B cell (primary cell): ENCODE measurements at regions of chr15 and their contacts with region 1.

Region 1: GRCh38 chr15:81296673-81297072 is 27.3 kb downstream of the STARD5 start:
- DNase-seq: peak; percentile 89
- ATAC-seq: peak; percentile 39
- H3K4me3 ChIP-seq: peak overlapping the region; percentile 79 to 100 (median 87)
- H3K4me3 Mint-ChIP-seq: peak overlapping the region; percentile 100
- H3K27ac ChIP-seq: peak overlapping the region; percentile 95 to 98
- H3K27ac Mint-ChIP-seq: peak overlapping the region; percentile 98
- H3K4me1 ChIP-seq: peaks cover 54 to 86% of the 10 kb centered on the region in 2 donors
- H3K4me1 Mint-ChIP-seq: peaks cover 92% of the 10 kb centered on the region
- H3K27me3 ChIP-seq: no peaks in the 10 kb centered on the region
- H3K27me3 Mint-ChIP-seq: no peaks in the 10 kb centered on the region
- CTCF ChIP-seq: no peak

Region 2: GRCh38 chr15:80234883-80235282 is 1061.8 kb before region 1 on chr15:
- CTCF ChIA-PET with region 1: no interaction called
- POLR2A ChIA-PET with region 1: no interaction called
- intact Hi-C with region 1: no loop called
- DNase-seq: peak; percentile 36
- ATAC-seq: no peak
- H3K4me3 ChIP-seq: no peak overlapping the region
- H3K4me3 Mint-ChIP-seq: no peak overlapping the region
- H3K27ac ChIP-seq: no peak overlapping the region
- H3K27ac Mint-ChIP-seq: no peak overlapping the region
- H3K4me1 ChIP-seq: no peaks in the 10 kb centered on the region
- H3K4me1 Mint-ChIP-seq: no peaks in the 10 kb centered on the region
- H3K27me3 ChIP-seq: peaks cover 0 to 13% (median 5%) of the 10 kb centered on the region in 4 experiments
- H3K27me3 Mint-ChIP-seq: peaks cover 33% of the 10 kb centered on the region
- CTCF ChIP-seq: peak; percentile 47

Region 3: GRCh38 chr15:81000624-81001151 is 296.0 kb before region 1 on chr15 and contains the start of gene TLNRD1:
- CTCF ChIA-PET with region 1: no interaction called
- POLR2A ChIA-PET with region 1: no interaction called
- intact Hi-C with region 1: loop called (anchors 2 kb)
- DNase-seq: peak; percentile 93
- ATAC-seq: peak; percentile 66
- H3K4me3 ChIP-seq: peak within 1 kb of the TSS; percentile 70 to 94 (median 77)
- H3K4me3 Mint-ChIP-seq: peak within 1 kb of the TSS; percentile 98
- H3K27ac ChIP-seq: peak within 1 kb of the TSS; percentile 81 to 94
- H3K27ac Mint-ChIP-seq: peak within 1 kb of the TSS; percentile 99
- H3K4me1 ChIP-seq: peaks cover 36 to 39% of the 10 kb centered on the region in 2 donors
- H3K4me1 Mint-ChIP-seq: peaks cover 44% of the 10 kb centered on the region
- H3K27me3 ChIP-seq: no peaks in the 10 kb centered on the region
- H3K27me3 Mint-ChIP-seq: no peaks in the 10 kb centered on the region
- CTCF ChIP-seq: no peak
- total RNA-seq, gene TLNRD1: 26.5 and 26.7 TPM in 2 replicates

Region 4: DNA sequence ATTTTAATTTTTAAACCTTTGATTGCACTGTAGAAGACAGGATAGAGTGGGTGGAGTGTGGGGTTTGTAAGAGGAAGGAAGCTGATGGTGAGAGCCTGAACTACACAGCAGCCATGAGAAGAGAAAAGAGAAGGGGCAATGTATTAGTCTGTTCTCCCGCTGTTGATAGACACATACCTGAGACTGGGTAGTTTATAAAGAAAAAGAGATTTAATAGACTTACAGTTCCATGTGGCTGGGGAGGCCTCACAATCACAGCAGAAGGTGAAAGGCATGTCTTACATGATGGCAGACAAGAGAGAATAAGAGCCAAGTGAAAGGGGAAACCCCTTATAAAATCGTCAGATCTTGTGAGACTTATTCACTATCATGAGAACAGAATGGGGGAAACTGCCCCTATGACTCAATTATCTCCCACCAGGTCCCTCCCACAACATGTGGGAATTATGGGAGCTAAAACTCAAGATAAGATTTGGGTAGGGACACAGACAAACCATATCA is 10.0 kb before region 1 on chr15:
- CTCF ChIA-PET with region 1: interaction called, 86 read pairs
- POLR2A ChIA-PET with region 1: interaction called, 60 read pairs
- intact Hi-C with region 1: loop called (anchors 1 kb)
- DNase-seq: peak; percentile 77
- ATAC-seq: peak; percentile 80
- H3K4me3 ChIP-seq: peak overlapping the region in 3 of 5 experiments; percentile 13 to 28 (median 21)
- H3K4me3 Mint-ChIP-seq: peak overlapping the region; percentile 65
- H3K27ac ChIP-seq: peak overlapping the region; percentile 92 to 98
- H3K27ac Mint-ChIP-seq: peak overlapping the region; percentile 96
- H3K4me1 ChIP-seq: peaks cover 65 to 81% of the 10 kb centered on the region in 2 donors
- H3K4me1 Mint-ChIP-seq: peaks cover 74% of the 10 kb centered on the region
- H3K27me3 ChIP-seq: no peaks in the 10 kb centered on the region
- H3K27me3 Mint-ChIP-seq: no peaks in the 10 kb centered on the region
- CTCF ChIP-seq: no peak

Region 5: DNA sequence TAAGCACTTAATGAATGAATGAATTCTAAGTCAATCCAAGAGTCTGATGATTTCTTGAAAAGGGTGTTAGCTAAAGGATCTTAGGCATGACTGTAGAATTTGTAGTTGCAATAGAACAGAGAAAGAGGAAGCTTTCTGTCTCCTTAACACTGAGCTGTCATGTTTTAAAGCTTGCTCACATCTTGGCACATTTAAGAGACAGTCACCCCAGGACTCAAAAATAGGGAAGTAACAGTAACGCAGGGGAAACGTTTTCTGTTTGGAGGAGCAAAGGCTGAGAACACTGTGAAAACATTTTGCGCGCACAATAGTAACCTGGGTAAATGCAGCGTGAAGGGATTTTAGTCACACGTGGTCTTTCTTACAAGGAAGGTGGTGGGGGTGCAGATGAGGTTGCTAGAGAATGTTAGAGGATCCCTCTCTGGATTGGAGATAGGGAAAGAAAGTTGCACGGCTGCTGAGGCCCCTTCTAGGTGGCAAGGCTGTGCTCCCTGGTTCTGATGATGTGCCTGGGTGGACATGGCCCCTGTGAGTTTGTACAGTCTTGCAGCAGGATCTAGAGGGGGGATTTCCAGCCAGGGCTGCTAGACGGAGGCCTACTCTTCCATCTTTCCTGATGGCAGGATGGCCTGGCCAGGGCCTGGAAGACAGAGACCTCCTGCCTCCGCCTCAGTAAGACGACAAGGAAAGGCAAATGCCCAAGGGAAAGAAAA is 15.2 kb after region 1 on chr15:
- CTCF ChIA-PET with region 1: interaction called, 65 read pairs
- POLR2A ChIA-PET with region 1: interaction called, 63 read pairs
- intact Hi-C with region 1: loop called (anchors 1 kb)
- DNase-seq: peak; percentile 85
- ATAC-seq: peak; percentile 86
- H3K4me3 ChIP-seq: peak overlapping the region in 3 of 5 experiments; percentile 23 to 27 (median 25)
- H3K4me3 Mint-ChIP-seq: peak overlapping the region; percentile 65
- H3K27ac ChIP-seq: peak overlapping the region; percentile 66 to 88
- H3K27ac Mint-ChIP-seq: peak overlapping the region; percentile 87
- H3K4me1 ChIP-seq: peaks cover 62 to 67% of the 10 kb centered on the region in 2 donors
- H3K4me1 Mint-ChIP-seq: peaks cover 80% of the 10 kb centered on the region
- H3K27me3 ChIP-seq: no peaks in the 10 kb centered on the region
- H3K27me3 Mint-ChIP-seq: no peaks in the 10 kb centered on the region
- CTCF ChIP-seq: no peak

Region 6: DNA sequence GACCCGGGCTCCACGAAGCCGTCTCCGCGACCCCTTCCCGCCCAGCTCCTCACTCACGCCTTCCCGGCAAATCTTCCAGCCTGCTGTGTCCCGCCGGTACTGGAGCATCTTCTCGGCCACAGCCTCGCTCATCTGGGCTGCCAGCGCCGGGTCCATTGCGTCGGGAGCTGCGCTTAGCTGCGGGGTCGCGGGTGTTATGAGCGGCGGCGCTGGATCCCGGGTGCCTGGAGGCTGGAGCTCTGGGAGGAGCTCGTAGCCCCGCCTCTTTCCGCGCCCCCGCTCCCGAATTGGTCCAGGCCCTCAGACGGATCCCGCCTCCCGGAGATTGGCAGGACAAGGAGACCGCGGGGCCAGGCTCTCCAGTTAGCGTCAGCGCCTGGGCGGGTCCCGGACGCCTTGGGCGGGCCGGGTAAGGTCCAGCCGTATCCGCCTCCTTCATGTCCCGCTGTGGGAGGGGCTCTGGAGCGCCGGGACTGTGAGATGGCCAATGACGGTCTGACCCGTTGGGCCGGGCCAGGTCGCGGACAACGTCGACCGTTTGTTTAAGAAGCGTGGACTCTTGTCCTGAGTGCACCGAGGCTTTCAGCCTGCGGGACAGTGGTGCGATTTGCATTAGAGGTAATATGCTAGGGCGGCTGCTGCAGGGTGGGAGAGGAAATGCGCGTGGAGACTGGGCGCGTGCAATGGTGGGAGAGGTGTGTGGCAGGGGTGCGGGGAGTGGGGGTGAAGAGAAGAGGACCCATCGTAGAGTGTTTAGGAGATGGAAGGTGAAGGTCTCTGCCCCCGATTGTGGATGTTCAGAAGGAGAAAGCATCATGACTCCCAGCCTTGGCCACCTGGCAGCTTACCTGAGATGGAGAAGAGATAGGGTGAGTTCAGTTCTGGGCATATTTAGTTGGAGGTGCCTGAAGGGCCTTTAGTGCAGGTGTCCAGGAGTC is 27.5 kb after region 1 on chr15 and contains the start of gene STARD5:
- CTCF ChIA-PET with region 1: interaction called, 10 read pairs
- POLR2A ChIA-PET with region 1: interaction called, 13 read pairs
- intact Hi-C with region 1: loop called (anchors 1 kb)
- DNase-seq: peak; percentile 92
- ATAC-seq: peak; percentile 99
- H3K4me3 ChIP-seq: peak within 1 kb of the TSS; percentile 54 to 79 (median 77)
- H3K4me3 Mint-ChIP-seq: peak within 1 kb of the TSS; percentile 100
- H3K27ac ChIP-seq: peak within 1 kb of the TSS; percentile 27 to 68
- H3K27ac Mint-ChIP-seq: peak within 1 kb of the TSS; percentile 95
- H3K4me1 ChIP-seq: peaks cover 18 to 32% of the 10 kb centered on the region in 2 donors
- H3K4me1 Mint-ChIP-seq: peaks cover 32% of the 10 kb centered on the region
- H3K27me3 ChIP-seq: no peaks in the 10 kb centered on the region
- H3K27me3 Mint-ChIP-seq: no peaks in the 10 kb centered on the region
- CTCF ChIP-seq: no peak
- total RNA-seq, gene STARD5: 15.7 and 17.2 TPM in 2 replicates